ENCODE measurements at regions of chr16 and their contacts with region 1.

Region 1: GRCh38 chr16:19860166-19861041 is 24.2 kb downstream of the GPRC5B start:
- DNase-seq: no peak
- ATAC-seq: peak in 1 of 2 donors; percentile 21
- H3K4me3 ChIP-seq: no peak overlapping the region
- H3K27ac ChIP-seq: peak overlapping the region; percentile 47 to 79 (median 76)
- H3K4me1 ChIP-seq: peaks cover 30 to 48% of the 10 kb centered on the region in 2 donors
- H3K27me3 ChIP-seq: no peaks in the 10 kb centered on the region
- CTCF ChIP-seq: no peak
- POLR2A ChIP-seq: no peak

Region 2: GRCh38 chr16:19831678-19832077 is 28.7 kb before region 1 on chr16:
- in situ Hi-C with region 1: no loop called
- intact Hi-C with region 1: loop called (anchors 1 kb)
- DNase-seq: peak; percentile 71 to 78
- ATAC-seq: peak; percentile 92
- H3K4me3 ChIP-seq: peak overlapping the region in 2 of 4 donors; percentile 24 to 32
- H3K27ac ChIP-seq: peak overlapping the region; percentile 92 to 99 (median 98)
- H3K4me1 ChIP-seq: peaks cover 39 to 41% of the 10 kb centered on the region in 2 donors
- H3K27me3 ChIP-seq: no peaks in the 10 kb centered on the region
- CTCF ChIP-seq: no peak
- POLR2A ChIP-seq: peak; percentile 62 to 84

Measured in gastrocnemius medialis (tissue), 4 donors.